Endothelial cell of umbilical vein (primary cell): ENCODE measurements at regions of chr3 and their contacts with region 1.

Region 1: DNA sequence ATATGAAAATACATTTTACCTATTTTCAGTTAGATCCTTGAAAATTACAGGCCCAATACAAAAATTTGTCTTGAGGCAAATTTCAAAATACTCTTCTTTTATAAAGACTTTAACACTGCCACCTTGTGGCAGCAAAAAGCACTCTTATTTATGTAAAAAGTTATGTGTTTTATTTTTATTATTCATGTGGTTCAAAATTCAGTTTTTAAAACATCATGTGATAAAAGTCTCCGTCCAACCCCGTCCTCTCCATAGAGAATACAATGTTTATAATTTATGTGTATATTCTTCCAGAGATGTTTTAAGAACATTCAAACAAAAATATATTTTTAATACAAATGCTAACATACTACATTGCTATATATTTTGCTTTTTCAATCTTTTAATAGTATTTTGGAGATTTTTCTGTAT is 36.9 kb upstream of the TRIM59 start:
- DNase-seq: peak; percentile 44
- H3K4me3 ChIP-seq: no peak overlapping the region
- H3K27ac ChIP-seq: no peak overlapping the region
- H3K4me1 ChIP-seq: peaks cover 5% of the 10 kb centered on the region
- H3K27me3 ChIP-seq: no peaks in the 10 kb centered on the region
- CTCF ChIP-seq: peak; percentile 30 to 36
- POLR2A ChIP-seq: no peak

Region 2: GRCh38 chr3:160449636-160450598 is 36.5 kb before region 1 on chr3 and contains the start of gene TRIM59:
- CTCF ChIA-PET with region 1: interaction called, 7 read pairs
- POLR2A ChIA-PET with region 1: interaction called, 5 read pairs
- dilution Hi-C with region 1: no loop called
- intact Hi-C with region 1: loop called (anchors 1 kb)
- DNase-seq: peak; percentile 98
- H3K4me3 ChIP-seq: peak within 1 kb of the TSS; percentile 52 to 85 (median 74)
- H3K27ac ChIP-seq: peak within 1 kb of the TSS; percentile 55
- H3K4me1 ChIP-seq: peaks cover 21% of the 10 kb centered on the region
- H3K27me3 ChIP-seq: no peaks in the 10 kb centered on the region
- CTCF ChIP-seq: no peak
- POLR2A ChIP-seq: peak; percentile 88
- total RNA-seq, gene TRIM59: 32.5 and 33.0 TPM in 2 replicates